ENCODE measurements at regions of chr3 and their contacts with region 1.

Region 1: DNA sequence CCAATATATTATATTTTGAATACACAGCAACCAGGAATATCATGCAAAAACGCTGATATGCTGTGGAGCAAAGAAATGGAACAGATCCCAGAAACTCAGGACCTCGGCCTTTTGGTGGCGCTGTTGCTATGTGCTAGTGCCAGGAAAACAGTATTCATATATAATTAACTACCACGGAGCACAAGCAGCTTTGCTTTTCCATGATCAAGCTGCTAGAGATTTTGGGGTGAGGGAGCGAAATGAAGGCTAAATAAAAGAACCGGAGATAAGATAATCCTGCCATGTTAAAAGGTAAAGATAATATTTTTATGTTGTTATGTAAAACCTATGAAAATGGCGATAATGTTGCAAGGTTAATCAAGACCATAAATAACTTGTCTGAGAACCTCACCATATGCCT is 157.7 kb upstream of the FAM3D start:
- H3K4me3 ChIP-seq: no peak overlapping the region
- H3K27ac ChIP-seq: no peak overlapping the region
- H3K4me1 ChIP-seq: no peaks in the 10 kb centered on the region
- CTCF ChIP-seq: no peak

Region 2: DNA sequence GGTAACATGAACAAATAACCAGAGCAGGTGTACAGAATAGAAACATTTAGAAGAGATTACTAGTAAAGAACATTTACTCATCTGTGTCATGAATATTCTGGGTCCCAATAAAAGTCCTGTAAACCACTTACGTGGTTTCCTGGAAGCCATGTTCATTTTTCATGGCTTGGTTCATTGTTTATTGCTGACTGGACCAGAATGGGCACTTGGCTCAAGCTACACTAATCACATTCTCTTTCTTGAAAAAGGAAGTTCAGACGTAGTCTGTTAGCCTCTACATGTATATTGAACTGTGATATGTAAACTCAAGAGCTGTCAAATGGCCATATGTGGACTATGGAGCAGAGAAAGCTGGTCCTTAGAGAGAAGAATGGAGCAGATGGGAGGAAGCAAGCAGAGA is 19.4 kb before region 1 on chr3:
- CTCF ChIA-PET with region 1: interaction called, 12 read pairs
- POLR2A ChIA-PET with region 1: no interaction called
- H3K4me3 ChIP-seq: no peak overlapping the region
- H3K27ac ChIP-seq: no peak overlapping the region
- H3K4me1 ChIP-seq: no peaks in the 10 kb centered on the region
- CTCF ChIP-seq: no peak

Region 3: DNA sequence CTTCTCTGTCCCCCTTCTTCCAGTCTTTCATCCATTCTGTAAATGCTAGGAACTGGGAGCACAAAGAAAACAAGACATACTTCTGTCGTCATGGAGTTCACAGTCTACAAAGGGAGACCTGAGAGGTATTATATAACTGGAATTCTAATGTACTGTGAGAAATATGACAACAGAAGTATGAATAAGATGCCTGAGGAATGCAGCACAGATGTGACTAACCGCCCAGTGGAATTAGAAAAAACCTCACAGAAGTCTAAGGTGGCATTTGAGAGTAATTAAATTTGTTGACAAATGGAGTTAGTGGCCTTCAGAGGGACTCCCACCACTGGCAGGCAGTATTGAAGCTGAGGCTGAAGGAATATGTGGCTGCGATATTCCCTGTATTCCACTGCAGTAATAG is 10.8 kb after region 1 on chr3:
- CTCF ChIA-PET with region 1: interaction called, 29 read pairs
- POLR2A ChIA-PET with region 1: no interaction called
- H3K4me3 ChIP-seq: no peak overlapping the region
- H3K27ac ChIP-seq: no peak overlapping the region
- H3K4me1 ChIP-seq: no peaks in the 10 kb centered on the region
- CTCF ChIP-seq: no peak

Region 4: DNA sequence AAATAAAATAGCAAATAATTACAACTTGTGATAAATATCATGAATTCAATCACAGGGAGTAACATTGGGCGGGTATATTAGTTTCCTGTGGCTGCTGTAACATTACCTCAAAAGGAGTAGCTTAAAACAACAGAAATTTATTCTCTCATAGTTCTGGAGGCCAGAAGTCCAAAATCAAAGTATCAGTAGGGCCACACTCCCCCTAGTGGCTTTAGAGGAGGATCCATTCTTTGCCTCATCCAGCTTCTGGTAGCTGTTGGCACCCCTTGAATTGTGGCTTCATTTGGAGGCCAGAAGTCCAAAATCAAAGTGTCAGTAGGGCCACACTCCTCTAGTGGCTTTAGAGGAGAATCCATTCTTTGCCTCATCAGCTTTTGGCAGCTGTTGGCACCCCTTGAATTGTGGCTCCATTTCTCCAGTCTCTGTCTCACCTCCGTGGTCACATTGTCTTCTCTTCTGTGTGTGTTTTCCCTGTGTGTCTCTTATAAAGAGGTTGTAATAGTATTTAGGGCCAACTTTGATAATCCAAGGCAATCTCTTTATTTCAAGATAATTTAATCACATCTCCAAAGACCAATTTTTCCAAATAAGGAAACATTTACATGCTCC is 228.6 kb after region 1 on chr3:
- CTCF ChIA-PET with region 1: interaction called, 16 read pairs
- POLR2A ChIA-PET with region 1: no interaction called
- H3K4me3 ChIP-seq: no peak overlapping the region
- H3K27ac ChIP-seq: no peak overlapping the region
- H3K4me1 ChIP-seq: no peaks in the 10 kb centered on the region
- CTCF ChIP-seq: no peak

Measured in HEK293 (cell line).